ENCODE measurements at regions of chr18 and their contacts with region 1.

Region 1: DNA sequence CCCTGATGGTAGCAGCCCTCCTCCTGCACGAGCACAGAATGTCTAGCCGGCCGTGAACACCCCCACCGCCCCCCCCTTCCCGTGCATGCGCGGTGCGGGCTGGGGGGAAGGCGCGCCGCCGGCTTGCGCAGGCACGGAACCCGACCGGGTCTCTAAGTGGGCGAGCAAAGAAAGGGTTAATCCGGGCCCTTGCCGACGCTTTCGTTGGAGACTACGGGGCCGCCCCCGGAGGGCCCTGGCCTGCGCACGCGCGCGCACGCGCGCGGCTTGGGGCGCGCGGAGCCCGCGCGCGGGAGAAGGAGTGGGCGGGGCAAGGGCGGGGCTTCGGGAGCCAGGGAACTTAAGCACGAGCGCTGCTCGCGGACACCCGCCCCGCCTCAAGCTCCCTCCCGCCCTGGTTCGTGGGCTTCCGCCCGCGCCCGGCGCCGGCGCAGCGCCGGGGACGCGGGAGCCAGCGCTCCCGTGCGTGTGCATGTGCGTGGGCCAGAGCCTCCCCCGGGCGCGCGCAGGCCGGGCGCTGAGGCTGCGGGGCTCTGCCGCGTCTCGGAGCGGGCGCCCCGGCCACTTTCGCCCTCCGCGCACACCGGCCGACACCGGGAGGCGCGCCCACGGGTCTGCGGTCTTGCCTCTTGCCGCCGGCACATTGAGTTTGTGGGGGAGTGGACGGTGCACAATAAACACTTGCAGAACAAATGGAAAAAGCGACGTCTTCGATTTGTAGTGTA is 617 bp upstream of the ZBTB14 start:
- DNase-seq: peak; percentile 94 to 98 (median 95)
- ATAC-seq: peak; percentile 81
- H3K4me3 ChIP-seq: peak overlapping the region; percentile 83
- H3K27ac ChIP-seq: peak overlapping the region; percentile 94
- H3K4me1 ChIP-seq: peaks cover 5 to 19% of the 10 kb centered on the region in 2 experiments; a peak in 3 of 5 replicates
- H3K27me3 ChIP-seq: no peaks in the 10 kb centered on the region
- CTCF ChIP-seq: no peak
- EP300 ChIP-seq: no peak
- POLR2A ChIP-seq: no peak
- RAD21 ChIP-seq: no peak

Region 2: GRCh38 chr18:5237723-5238370 is 58.3 kb before region 1 on chr18:
- CTCF ChIA-PET with region 1: no interaction called
- POLR2A ChIA-PET with region 1: interaction called, 25 read pairs
- in situ Hi-C with region 1: no loop called
- intact Hi-C with region 1: loop called (anchors 1 kb)
- DNase-seq: peak; percentile 87 to 95 (median 88)
- ATAC-seq: peak; percentile 96
- H3K4me3 ChIP-seq: peak overlapping the region; percentile 76
- H3K27ac ChIP-seq: peak overlapping the region; percentile 92
- H3K4me1 ChIP-seq: peaks cover 3 to 20% of the 10 kb centered on the region in 2 experiments
- H3K27me3 ChIP-seq: no peaks in the 10 kb centered on the region
- CTCF ChIP-seq: peak in 1 of 3 experiments; percentile 26; a peak in 1 of 6 replicates
- EP300 ChIP-seq: peak; percentile 13; the same call in 1 of the 2 replicates
- POLR2A ChIP-seq: peak; percentile 95
- RAD21 ChIP-seq: no peak

Region 3: DNA sequence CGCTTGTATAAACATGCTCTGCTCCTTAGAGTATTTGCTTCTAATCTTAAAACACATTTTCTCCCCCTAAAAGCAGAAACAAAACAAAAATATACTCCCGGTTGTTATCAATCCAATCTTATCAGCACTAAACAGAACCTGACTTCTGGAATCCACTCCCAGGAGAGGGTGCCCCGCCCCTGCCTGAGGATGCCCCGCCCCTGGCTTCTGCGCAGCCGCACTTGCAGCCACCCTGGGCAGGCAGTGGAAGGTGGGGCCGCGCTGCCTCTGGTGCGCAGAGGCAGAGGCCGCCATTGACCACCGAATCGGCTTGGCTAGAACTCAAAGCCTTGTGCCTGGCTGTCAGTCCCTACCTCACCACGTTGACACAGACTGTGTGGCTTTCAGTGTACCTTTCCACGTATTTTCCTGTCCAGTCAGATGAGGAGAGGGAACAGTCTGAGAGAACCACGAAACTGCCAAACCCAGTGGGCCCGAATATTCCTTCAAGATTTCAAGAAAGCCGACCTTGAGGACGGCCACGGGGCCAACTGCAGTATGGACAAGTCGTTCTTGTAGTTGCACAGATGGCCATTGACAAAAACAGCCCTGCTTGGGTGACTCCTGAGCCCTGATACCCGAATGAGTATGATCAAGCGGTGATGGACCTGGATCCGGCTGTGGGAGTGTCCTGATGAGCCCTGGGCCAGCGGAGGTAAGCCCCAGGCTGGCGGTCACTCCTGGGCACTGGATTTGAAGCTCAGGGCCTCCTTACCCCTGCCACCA is 1387.2 kb after region 1 on chr18:
- CTCF ChIA-PET with region 1: no interaction called
- POLR2A ChIA-PET with region 1: no interaction called
- in situ Hi-C with region 1: no loop called
- intact Hi-C with region 1: loop called (anchors 10 kb)
- DNase-seq: peak; percentile 96 to 100 (median 98)
- ATAC-seq: peak; percentile 93
- H3K4me3 ChIP-seq: peak overlapping the region; percentile 52
- H3K27ac ChIP-seq: peak overlapping the region; percentile 87
- H3K4me1 ChIP-seq: peaks cover 9 to 31% of the 10 kb centered on the region in 2 experiments; a peak in 3 of 5 replicates
- H3K27me3 ChIP-seq: no peaks in the 10 kb centered on the region
- CTCF ChIP-seq: peak in 2 of 3 experiments; percentile 38 to 51; a peak in 4 of 6 replicates
- EP300 ChIP-seq: peak; percentile 84
- POLR2A ChIP-seq: peak; percentile 93
- RAD21 ChIP-seq: peak; percentile 58 to 61

Region 4: DNA sequence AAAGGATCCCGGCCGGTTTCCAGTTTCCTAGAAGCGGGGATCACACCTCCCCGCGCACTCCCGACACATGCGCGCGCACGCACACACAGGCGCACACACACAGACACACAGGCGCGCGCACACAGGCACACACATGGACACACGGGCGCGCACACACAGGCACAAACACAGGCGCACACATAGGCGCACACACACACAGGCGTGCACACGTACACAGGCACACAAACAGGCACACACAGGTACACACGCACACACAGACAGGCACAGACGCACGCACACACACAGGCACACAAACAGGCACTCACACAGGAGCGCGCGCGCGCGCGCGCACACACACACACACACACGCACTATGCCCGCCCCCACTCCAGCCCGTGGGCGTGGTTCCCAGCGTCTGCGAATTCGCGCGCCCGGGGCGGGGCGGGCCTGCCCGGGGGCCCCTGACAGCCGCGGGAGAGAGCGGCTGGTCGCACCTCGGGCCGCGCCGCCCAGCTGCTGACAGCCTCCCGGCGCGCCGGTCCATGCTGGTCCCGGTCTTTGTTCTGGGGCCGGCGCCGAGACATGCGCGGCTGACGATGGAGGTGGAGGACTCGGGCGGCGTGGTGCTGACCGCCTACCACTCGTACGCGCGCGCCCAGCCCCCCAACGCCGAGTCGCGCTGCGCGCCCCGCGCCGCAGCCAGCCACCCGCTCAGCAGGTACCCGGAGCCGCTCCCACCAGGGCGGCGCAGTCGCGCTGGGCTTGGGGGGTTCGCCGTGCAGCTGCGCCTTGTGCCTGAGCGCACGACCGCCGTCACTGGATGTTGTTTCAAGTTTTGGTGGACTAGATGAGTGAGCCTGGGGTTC is 1433.3 kb after region 1 on chr18 and contains the start of gene ARHGAP28:
- CTCF ChIA-PET with region 1: no interaction called
- POLR2A ChIA-PET with region 1: no interaction called
- in situ Hi-C with region 1: loop called (anchors 25 kb)
- intact Hi-C with region 1: loop called (anchors 10 kb)
- DNase-seq: peak; percentile 88 to 91 (median 91)
- ATAC-seq: peak; percentile 97
- H3K4me3 ChIP-seq: peak within 1 kb of the TSS; percentile 61
- H3K27ac ChIP-seq: peak within 1 kb of the TSS; percentile 56
- H3K4me1 ChIP-seq: peaks cover 3 to 11% of the 10 kb centered on the region in 2 experiments; a peak in 3 of 5 replicates
- H3K27me3 ChIP-seq: no peaks in the 10 kb centered on the region
- CTCF ChIP-seq: peak; percentile 45 to 74 (median 60); a peak in 5 of 6 replicates
- EP300 ChIP-seq: no peak
- POLR2A ChIP-seq: peak; percentile 61
- RAD21 ChIP-seq: peak; percentile 18 to 50; a peak in 3 of 4 replicates
- polyA plus RNA-seq, gene ARHGAP28: 0.93 to 2.6 TPM